Right lobe of liver (tissue), 6 donors: ENCODE measurements at regions of chr16 and their contacts with region 1.

Region 1: DNA sequence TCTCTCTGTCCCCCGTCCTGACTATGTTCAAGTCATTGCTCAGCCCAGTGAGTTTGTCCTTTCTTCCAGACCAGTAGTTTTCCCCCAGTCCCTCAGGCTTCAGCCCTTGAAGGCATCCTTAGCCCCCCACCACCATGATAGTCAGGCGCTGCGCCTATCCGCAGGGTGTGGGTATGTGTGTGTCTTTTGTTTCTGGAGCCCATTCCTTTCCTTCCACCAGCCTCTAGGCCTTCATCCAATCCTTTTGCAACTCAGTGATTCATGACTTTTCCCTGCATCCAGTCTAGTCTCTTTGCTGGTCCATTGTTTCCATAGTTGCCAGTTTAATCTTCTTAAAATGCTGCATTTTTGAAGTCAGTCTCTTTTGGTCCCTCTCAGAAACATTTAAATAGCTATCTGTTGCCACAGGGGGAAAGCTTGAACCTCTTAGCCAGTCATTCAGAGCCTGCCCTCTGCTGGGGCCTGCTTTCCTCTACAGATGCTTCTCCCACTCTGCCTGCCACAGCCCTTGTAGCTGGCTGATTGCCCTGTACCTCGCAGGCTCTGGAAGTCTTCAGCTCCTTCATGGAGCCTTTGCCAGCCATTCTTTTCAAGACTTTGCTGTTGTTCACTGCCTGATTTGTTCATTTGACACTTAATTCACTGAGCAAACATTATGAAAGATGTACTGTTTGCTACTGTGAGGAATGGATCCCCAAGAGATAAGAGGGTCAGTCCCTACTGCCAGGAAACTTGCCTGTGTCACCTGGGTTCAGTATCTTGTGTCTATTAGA is 55.9 kb upstream of the ADCY7 start:
- DNase-seq: peak; percentile 68 to 77 (median 76)
- ATAC-seq: peak; percentile 92 to 97 (median 92)
- H3K4me3 ChIP-seq: no peak overlapping the region
- H3K27ac ChIP-seq: peak overlapping the region in 1 of 3 donors; percentile 45
- H3K4me1 ChIP-seq: peaks cover 0 to 34% (median 10%) of the 10 kb centered on the region in 4 donors
- H3K27me3 ChIP-seq: no peaks in the 10 kb centered on the region
- CTCF ChIP-seq: peak; percentile 62 to 74 (median 69)
- POLR2A ChIP-seq: no peak

Region 2: GRCh38 chr16:50024684-50025536 is 185.5 kb before region 1 on chr16 and contains the start of gene CNEP1R1:
- intact Hi-C with region 1: loop called in 1 of 2 experiments (anchors 10 kb)
- DNase-seq: peak; percentile 93 to 96 (median 96)
- ATAC-seq: peak; percentile 99 to 100 (median 100)
- H3K4me3 ChIP-seq: peak within 1 kb of the TSS; percentile 89 to 100 (median 99)
- H3K27ac ChIP-seq: peak within 1 kb of the TSS; percentile 56 to 84 (median 82)
- H3K4me1 ChIP-seq: peaks cover 0 to 9% (median 0%) of the 10 kb centered on the region in 4 donors
- H3K27me3 ChIP-seq: no peaks in the 10 kb centered on the region
- CTCF ChIP-seq: peak; percentile 98 to 100 (median 100)
- POLR2A ChIP-seq: peak; percentile 68
- total RNA-seq, gene CNEP1R1: 6.0 to 9.6 (median 7.5) TPM

Region 3: DNA sequence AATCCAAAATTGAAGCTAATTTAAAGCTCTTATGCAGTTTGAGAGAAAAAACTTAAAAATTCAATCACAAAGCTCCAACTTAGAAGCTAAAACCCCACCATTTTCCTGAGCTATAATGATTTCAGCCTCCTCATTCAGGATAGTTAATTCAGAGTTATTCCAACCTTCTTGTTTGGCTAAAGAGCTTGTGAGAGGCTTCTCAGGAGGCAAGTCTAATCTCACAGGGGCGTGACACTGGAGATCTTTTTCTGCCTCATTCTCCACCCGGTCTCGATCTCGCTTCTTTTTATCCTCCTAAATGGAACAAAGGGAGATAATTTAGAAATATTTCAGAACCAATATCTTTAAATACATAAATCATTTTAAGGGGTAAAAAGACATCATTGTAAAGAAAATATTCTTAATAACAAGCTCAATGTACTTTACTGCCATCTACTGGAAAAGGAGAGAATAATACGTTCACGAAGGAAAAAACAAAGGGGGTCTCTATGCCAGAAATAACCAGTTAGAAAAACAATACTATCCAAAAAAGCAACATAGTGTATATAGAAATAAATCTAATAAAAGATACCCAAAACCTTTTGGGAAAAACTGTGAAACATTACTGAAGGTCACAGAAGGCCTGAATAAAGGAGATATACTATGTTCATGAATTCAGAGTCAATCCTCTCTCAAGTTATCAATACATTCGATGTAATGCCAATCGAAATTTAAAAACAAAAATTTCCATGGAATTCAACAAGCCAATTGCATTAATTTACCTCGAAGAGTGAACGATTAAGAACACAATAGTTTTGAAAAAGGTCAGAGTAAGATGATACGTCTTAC is 144.4 kb after region 1 on chr16:
- intact Hi-C with region 1: loop called in 1 of 2 experiments (anchors 10 kb)
- DNase-seq: no peak
- ATAC-seq: no peak
- H3K4me3 ChIP-seq: no peak overlapping the region
- H3K27ac ChIP-seq: no peak overlapping the region
- H3K4me1 ChIP-seq: peaks cover 0 to 5% (median 0%) of the 10 kb centered on the region in 4 donors
- H3K27me3 ChIP-seq: no peaks in the 10 kb centered on the region
- CTCF ChIP-seq: peak; percentile 38 to 74 (median 62)
- POLR2A ChIP-seq: no peak